ENCODE measurements at regions of chr2 and their contacts with region 1.

Region 1: GRCh38 chr2:201208563-201209252 is 25.8 kb downstream of the CASP10 start:
- DNase-seq: no peak
- H3K4me3 Mint-ChIP-seq: no peak overlapping the region
- H3K27ac Mint-ChIP-seq: no peak overlapping the region
- H3K4me1 Mint-ChIP-seq: peaks cover 43% of the 10 kb centered on the region
- H3K27me3 Mint-ChIP-seq: no peaks in the 10 kb centered on the region

Region 2: DNA sequence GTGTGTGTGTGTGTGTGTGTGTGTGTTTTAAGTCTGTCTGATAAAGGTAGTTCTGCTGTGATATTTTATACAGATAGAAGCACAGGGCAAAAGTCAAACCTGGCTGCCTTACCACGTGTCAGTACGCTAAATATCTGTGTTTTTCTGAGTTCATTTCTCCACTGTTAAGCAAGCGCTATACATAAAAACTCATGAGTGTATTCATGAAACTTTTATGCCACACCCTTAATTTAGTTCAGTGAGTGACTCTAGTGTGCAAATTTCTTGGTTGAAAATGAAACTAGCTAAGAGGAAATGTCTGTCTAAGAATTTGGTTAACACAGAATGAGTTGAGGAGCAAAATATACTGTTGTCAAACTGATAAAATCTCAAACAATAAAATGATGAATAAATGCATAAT is 14.6 kb before region 1 on chr2:
- CTCF ChIA-PET with region 1: interaction called, 6 read pairs
- intact Hi-C with region 1: loop called (anchors 1 kb)
- DNase-seq: no peak
- H3K4me3 Mint-ChIP-seq: no peak overlapping the region
- H3K27ac Mint-ChIP-seq: peak overlapping the region; percentile 50
- H3K4me1 Mint-ChIP-seq: peaks cover 66% of the 10 kb centered on the region
- H3K27me3 Mint-ChIP-seq: no peaks in the 10 kb centered on the region

Region 3: GRCh38 chr2:201466050-201466675 is 257.5 kb after region 1 on chr2:
- CTCF ChIA-PET with region 1: no interaction called
- intact Hi-C with region 1: no loop called
- DNase-seq: no peak
- H3K4me3 Mint-ChIP-seq: no peak overlapping the region
- H3K27ac Mint-ChIP-seq: no peak overlapping the region
- H3K4me1 Mint-ChIP-seq: peaks cover 4% of the 10 kb centered on the region
- H3K27me3 Mint-ChIP-seq: no peaks in the 10 kb centered on the region

Region 4: GRCh38 chr2:201580486-201580885 is 371.8 kb after region 1 on chr2:
- CTCF ChIA-PET with region 1: no interaction called
- intact Hi-C with region 1: no loop called
- DNase-seq: no peak
- H3K4me3 Mint-ChIP-seq: no peak overlapping the region
- H3K27ac Mint-ChIP-seq: no peak overlapping the region
- H3K4me1 Mint-ChIP-seq: no peaks in the 10 kb centered on the region
- H3K27me3 Mint-ChIP-seq: no peaks in the 10 kb centered on the region

Measured in activated naive CD4-positive, alpha-beta T cell treated with anti-CD3 and anti-CD28 coated beads for 36 hours (primary cell).